Activated naive CD4-positive, alpha-beta T cell treated with anti-CD3 and anti-CD28 coated beads for 36 hours (primary cell): ENCODE measurements at regions of chr1 and their contacts with region 1.

Region 1: GRCh38 chr1:185044981-185045813 is at the start of gene RNF2:
- DNase-seq: peak; percentile 83
- H3K4me3 Mint-ChIP-seq: peak within 1 kb of the TSS; percentile 89
- H3K27ac Mint-ChIP-seq: peak within 1 kb of the TSS; percentile 69
- H3K4me1 Mint-ChIP-seq: peaks cover 30% of the 10 kb centered on the region
- H3K27me3 Mint-ChIP-seq: no peaks in the 10 kb centered on the region
- total RNA-seq, gene RNF2: 19.2 to 23.4 TPM

Region 2: GRCh38 chr1:184051485-184052193 is 993.6 kb before region 1 on chr1 and contains the start of gene TSEN15:
- CTCF ChIA-PET with region 1: no interaction called
- intact Hi-C with region 1: loop called (anchors 10 kb)
- DNase-seq: peak; percentile 84
- H3K4me3 Mint-ChIP-seq: peak within 1 kb of the TSS; percentile 96
- H3K27ac Mint-ChIP-seq: peak within 1 kb of the TSS; percentile 96
- H3K4me1 Mint-ChIP-seq: peaks cover 34% of the 10 kb centered on the region
- H3K27me3 Mint-ChIP-seq: peaks cover 5% of the 10 kb centered on the region
- total RNA-seq, gene TSEN15: 52.6 to 57.6 TPM

Region 3: GRCh38 chr1:184805667-184806295 is 239.4 kb before region 1 on chr1:
- CTCF ChIA-PET with region 1: interaction called, 4 read pairs
- intact Hi-C with region 1: loop called (anchors 1 kb)
- DNase-seq: peak; percentile 90
- H3K4me3 Mint-ChIP-seq: no peak overlapping the region
- H3K27ac Mint-ChIP-seq: peak overlapping the region; percentile 6
- H3K4me1 Mint-ChIP-seq: peaks cover 2% of the 10 kb centered on the region
- H3K27me3 Mint-ChIP-seq: no peaks in the 10 kb centered on the region

Region 4: GRCh38 chr1:185139246-185139645 is 94.0 kb after region 1 on chr1:
- CTCF ChIA-PET with region 1: no interaction called
- intact Hi-C with region 1: no loop called
- DNase-seq: no peak
- H3K4me3 Mint-ChIP-seq: no peak overlapping the region
- H3K27ac Mint-ChIP-seq: no peak overlapping the region
- H3K4me1 Mint-ChIP-seq: no peaks in the 10 kb centered on the region
- H3K27me3 Mint-ChIP-seq: no peaks in the 10 kb centered on the region

Region 5: GRCh38 chr1:185170291-185170848 is 125.2 kb after region 1 on chr1:
- CTCF ChIA-PET with region 1: interaction called, 10 read pairs
- intact Hi-C with region 1: loop called (anchors 1 kb)
- DNase-seq: peak; percentile 60
- H3K4me3 Mint-ChIP-seq: no peak overlapping the region
- H3K27ac Mint-ChIP-seq: peak overlapping the region; percentile 46
- H3K4me1 Mint-ChIP-seq: peaks cover 3% of the 10 kb centered on the region
- H3K27me3 Mint-ChIP-seq: no peaks in the 10 kb centered on the region

Region 6: GRCh38 chr1:185694081-185694480 is 648.9 kb after region 1 on chr1:
- CTCF ChIA-PET with region 1: no interaction called
- intact Hi-C with region 1: loop called (anchors 2 kb)
- DNase-seq: peak; percentile 45
- H3K4me3 Mint-ChIP-seq: peak overlapping the region; percentile 65
- H3K27ac Mint-ChIP-seq: peak overlapping the region; percentile 22
- H3K4me1 Mint-ChIP-seq: peaks cover 12% of the 10 kb centered on the region
- H3K27me3 Mint-ChIP-seq: no peaks in the 10 kb centered on the region